CD4-positive, alpha-beta T cell (primary cell): ENCODE measurements at regions of chr1 and their contacts with region 1.

Region 1: GRCh38 chr1:212291505-212292134 is 6.4 kb downstream of the PPP2R5A start:
- DNase-seq: peak in 3 of 14 experiments; percentile 74 to 80 (median 79)
- ATAC-seq: peak; percentile 73
- H3K4me3 ChIP-seq: no peak overlapping the region
- H3K4me3 Mint-ChIP-seq: peak overlapping the region; percentile 66
- H3K27ac ChIP-seq: no peak overlapping the region
- H3K27ac Mint-ChIP-seq: peak overlapping the region; percentile 24
- H3K4me1 ChIP-seq: peaks cover 32% of the 10 kb centered on the region
- H3K4me1 Mint-ChIP-seq: peaks cover 84% of the 10 kb centered on the region
- H3K27me3 ChIP-seq: no peaks in the 10 kb centered on the region
- H3K27me3 Mint-ChIP-seq: no peaks in the 10 kb centered on the region
- CTCF ChIP-seq: peak; percentile 75

Region 2: GRCh38 chr1:210477381-210477783 is 1814.2 kb before region 1 on chr1:
- CTCF ChIA-PET with region 1: no interaction called
- POLR2A ChIA-PET with region 1: no interaction called
- intact Hi-C with region 1: no loop called
- DNase-seq: no peak
- ATAC-seq: no peak
- H3K4me3 ChIP-seq: no peak overlapping the region
- H3K4me3 Mint-ChIP-seq: no peak overlapping the region
- H3K27ac ChIP-seq: no peak overlapping the region
- H3K27ac Mint-ChIP-seq: no peak overlapping the region
- H3K4me1 ChIP-seq: no peaks in the 10 kb centered on the region
- H3K4me1 Mint-ChIP-seq: no peaks in the 10 kb centered on the region
- H3K27me3 ChIP-seq: no peaks in the 10 kb centered on the region
- H3K27me3 Mint-ChIP-seq: no peaks in the 10 kb centered on the region
- CTCF ChIP-seq: no peak

Region 3: DNA sequence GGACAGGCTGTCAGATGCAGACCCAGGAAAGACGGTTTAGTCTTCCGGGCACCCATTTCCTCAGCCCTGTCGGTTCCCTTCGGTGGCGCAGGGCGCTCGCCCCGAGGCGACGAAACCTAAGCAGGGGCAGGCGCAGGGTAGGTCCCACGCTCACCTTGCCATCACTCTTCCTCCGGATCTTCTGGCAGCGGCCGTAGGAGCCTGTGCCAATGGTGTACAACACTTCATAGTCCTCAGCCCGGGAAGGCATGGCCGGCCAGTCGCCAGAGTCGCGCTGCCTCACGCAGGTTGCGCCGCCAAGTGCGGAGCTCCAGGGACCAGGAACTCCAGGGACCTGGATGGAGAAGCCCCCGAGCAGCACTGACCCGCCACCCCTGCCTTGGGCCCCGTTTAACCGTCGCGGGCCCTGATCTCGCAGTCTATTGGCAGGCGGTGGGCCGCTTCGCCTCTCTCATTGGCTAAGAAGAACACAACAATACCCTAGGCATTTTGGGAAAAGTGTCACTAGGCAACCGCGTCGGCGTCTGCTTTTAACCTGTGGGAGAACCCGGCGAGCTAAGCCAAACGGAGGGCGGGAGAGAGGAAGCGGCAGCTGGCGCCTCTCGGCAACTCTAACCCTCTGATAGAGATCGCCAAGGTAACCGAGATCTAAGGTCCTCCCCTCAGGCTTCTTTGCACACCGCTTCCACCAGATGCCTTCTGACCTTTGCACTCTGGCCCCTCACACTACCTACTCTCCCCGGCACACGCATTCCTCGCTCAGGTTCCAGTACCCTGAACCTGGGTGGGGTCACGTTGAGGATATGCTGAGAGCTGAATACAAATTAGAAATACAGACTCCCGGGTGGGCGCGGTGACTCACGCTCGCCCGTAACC is 616.2 kb before region 1 on chr1 and contains the start of gene NEK2:
- CTCF ChIA-PET with region 1: interaction called, 5 read pairs
- POLR2A ChIA-PET with region 1: no interaction called
- intact Hi-C with region 1: loop called (anchors 5 kb)
- DNase-seq: peak; percentile 70 to 93 (median 79)
- ATAC-seq: peak; percentile 94
- H3K4me3 ChIP-seq: peak within 1 kb of the TSS; percentile 67
- H3K4me3 Mint-ChIP-seq: peak within 1 kb of the TSS; percentile 92
- H3K27ac ChIP-seq: no peak within 1 kb of the TSS
- H3K27ac Mint-ChIP-seq: peak within 1 kb of the TSS; percentile 73
- H3K4me1 ChIP-seq: peaks cover 15% of the 10 kb centered on the region
- H3K4me1 Mint-ChIP-seq: peaks cover 7% of the 10 kb centered on the region
- H3K27me3 ChIP-seq: no peaks in the 10 kb centered on the region
- H3K27me3 Mint-ChIP-seq: no peaks in the 10 kb centered on the region
- CTCF ChIP-seq: no peak
- total RNA-seq, gene NEK2: not detected

Region 4: GRCh38 chr1:211874521-211875347 is 416.9 kb before region 1 on chr1:
- CTCF ChIA-PET with region 1: no interaction called
- POLR2A ChIA-PET with region 1: no interaction called
- intact Hi-C with region 1: no loop called
- DNase-seq: no peak
- ATAC-seq: no peak
- H3K4me3 ChIP-seq: no peak overlapping the region
- H3K4me3 Mint-ChIP-seq: no peak overlapping the region
- H3K27ac ChIP-seq: no peak overlapping the region
- H3K27ac Mint-ChIP-seq: no peak overlapping the region
- H3K4me1 ChIP-seq: no peaks in the 10 kb centered on the region
- H3K4me1 Mint-ChIP-seq: no peaks in the 10 kb centered on the region
- H3K27me3 ChIP-seq: peaks cover 0 to 2% of the 10 kb centered on the region in 2 experiments
- H3K27me3 Mint-ChIP-seq: peaks cover 20% of the 10 kb centered on the region
- CTCF ChIP-seq: no peak

Region 5: GRCh38 chr1:212062832-212063438 is 228.7 kb before region 1 on chr1:
- CTCF ChIA-PET with region 1: interaction called, 11 read pairs
- POLR2A ChIA-PET with region 1: no interaction called
- intact Hi-C with region 1: loop called in 1 of 2 experiments (anchors 2 kb)
- DNase-seq: peak in 3 of 14 experiments; percentile 47 to 57 (median 55)
- ATAC-seq: peak; percentile 69
- H3K4me3 ChIP-seq: no peak overlapping the region
- H3K4me3 Mint-ChIP-seq: no peak overlapping the region
- H3K27ac ChIP-seq: no peak overlapping the region
- H3K27ac Mint-ChIP-seq: no peak overlapping the region
- H3K4me1 ChIP-seq: no peaks in the 10 kb centered on the region
- H3K4me1 Mint-ChIP-seq: no peaks in the 10 kb centered on the region
- H3K27me3 ChIP-seq: no peaks in the 10 kb centered on the region
- H3K27me3 Mint-ChIP-seq: no peaks in the 10 kb centered on the region
- CTCF ChIP-seq: peak; percentile 80

Region 6: DNA sequence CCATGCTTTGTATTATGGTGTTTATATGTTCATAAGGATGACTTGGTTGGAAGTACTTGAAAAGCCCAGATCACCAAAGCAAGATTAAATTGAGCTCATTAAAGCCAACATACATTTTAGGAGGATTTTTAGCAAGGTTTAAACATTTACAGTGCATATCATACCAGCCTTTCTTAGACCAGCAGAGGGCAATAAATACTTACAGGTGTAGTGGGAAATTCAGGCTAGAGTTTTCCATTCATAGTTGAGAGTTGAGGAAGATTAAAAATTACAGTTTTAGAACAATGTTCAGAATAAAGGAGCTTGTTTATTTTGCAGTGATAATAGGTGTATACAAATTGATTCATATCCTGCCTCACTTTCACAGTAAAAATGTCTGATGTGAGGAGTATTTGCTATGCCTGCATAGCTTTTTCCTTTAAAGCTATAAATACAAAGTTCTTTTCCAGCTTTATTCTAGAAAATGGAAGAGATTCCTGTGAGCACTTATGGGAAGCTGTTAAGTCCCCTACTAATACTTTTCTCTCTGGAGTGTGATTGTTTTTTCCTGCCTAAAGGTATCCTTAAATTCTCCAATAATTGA is 220.8 kb before region 1 on chr1:
- CTCF ChIA-PET with region 1: interaction called, 25 read pairs
- POLR2A ChIA-PET with region 1: interaction called, 12 read pairs
- intact Hi-C with region 1: loop called (anchors 1 kb)
- DNase-seq: peak in 3 of 14 experiments; percentile 68 to 71 (median 70)
- ATAC-seq: peak; percentile 62
- H3K4me3 ChIP-seq: no peak overlapping the region
- H3K4me3 Mint-ChIP-seq: no peak overlapping the region
- H3K27ac ChIP-seq: no peak overlapping the region
- H3K27ac Mint-ChIP-seq: no peak overlapping the region
- H3K4me1 ChIP-seq: no peaks in the 10 kb centered on the region
- H3K4me1 Mint-ChIP-seq: no peaks in the 10 kb centered on the region
- H3K27me3 ChIP-seq: no peaks in the 10 kb centered on the region
- H3K27me3 Mint-ChIP-seq: no peaks in the 10 kb centered on the region
- CTCF ChIP-seq: peak; percentile 76

Region 7: GRCh38 chr1:212328248-212328647 is 36.6 kb after region 1 on chr1:
- CTCF ChIA-PET with region 1: no interaction called
- POLR2A ChIA-PET with region 1: no interaction called
- intact Hi-C with region 1: loop called (anchors 5 kb)
- DNase-seq: no peak
- ATAC-seq: no peak
- H3K4me3 ChIP-seq: no peak overlapping the region
- H3K4me3 Mint-ChIP-seq: no peak overlapping the region
- H3K27ac ChIP-seq: no peak overlapping the region
- H3K27ac Mint-ChIP-seq: no peak overlapping the region
- H3K4me1 ChIP-seq: peaks cover 5% of the 10 kb centered on the region
- H3K4me1 Mint-ChIP-seq: peaks cover 54% of the 10 kb centered on the region
- H3K27me3 ChIP-seq: no peaks in the 10 kb centered on the region
- H3K27me3 Mint-ChIP-seq: no peaks in the 10 kb centered on the region
- CTCF ChIP-seq: no peak

Region 8: DNA sequence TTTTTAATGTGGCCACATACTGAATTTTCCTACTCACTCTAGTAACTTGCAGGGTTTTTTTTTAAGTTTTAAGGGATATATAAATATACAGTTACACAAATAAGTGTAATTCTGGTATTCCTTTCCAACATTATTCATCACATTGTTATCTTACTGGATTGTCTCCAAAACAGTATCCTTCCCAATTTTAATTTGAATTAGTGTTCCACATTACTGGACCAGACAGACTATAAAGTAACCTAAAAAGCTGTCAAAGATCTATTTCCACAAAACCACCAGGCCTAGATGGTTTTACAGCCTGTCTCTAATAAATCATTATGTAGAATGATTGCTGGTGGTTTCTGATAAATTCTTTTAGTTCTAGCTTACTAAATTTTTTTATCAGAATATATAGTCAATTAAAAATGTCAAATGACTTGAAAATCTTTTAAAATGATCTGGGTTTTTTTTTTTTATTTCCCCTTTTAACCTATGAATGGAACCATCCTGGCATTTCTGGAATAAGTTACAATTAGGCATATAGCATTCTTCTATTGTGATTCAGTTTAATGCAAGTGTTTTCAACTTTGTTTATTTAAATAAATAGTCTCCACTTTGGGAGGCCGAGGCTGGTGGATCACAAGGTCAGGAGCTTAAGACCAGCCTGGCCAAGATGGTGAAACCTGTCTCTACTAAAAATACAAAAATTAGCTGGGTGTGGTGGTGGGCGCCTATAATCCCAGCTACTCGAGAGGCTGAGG is 63.8 kb after region 1 on chr1:
- CTCF ChIA-PET with region 1: interaction called, 4 read pairs
- POLR2A ChIA-PET with region 1: no interaction called
- intact Hi-C with region 1: loop called in 1 of 2 experiments (anchors 5 kb)
- DNase-seq: no peak
- ATAC-seq: no peak
- H3K4me3 ChIP-seq: no peak overlapping the region
- H3K4me3 Mint-ChIP-seq: no peak overlapping the region
- H3K27ac ChIP-seq: no peak overlapping the region
- H3K27ac Mint-ChIP-seq: peak overlapping the region; percentile 4
- H3K4me1 ChIP-seq: no peaks in the 10 kb centered on the region
- H3K4me1 Mint-ChIP-seq: no peaks in the 10 kb centered on the region
- H3K27me3 ChIP-seq: no peaks in the 10 kb centered on the region
- H3K27me3 Mint-ChIP-seq: no peaks in the 10 kb centered on the region
- CTCF ChIP-seq: no peak